Activated CD4-positive, alpha-beta T cell treated with anti-CD3 and anti-CD28 coated beads for 36 hours (primary cell): ENCODE measurements at regions of chr16 and their contacts with region 1.

Region 1: GRCh38 chr16:78962457-78962929 is 638.0 kb downstream of the MAF start:
- DNase-seq: no peak
- ATAC-seq: peak; percentile 86
- H3K4me3 Mint-ChIP-seq: no peak overlapping the region
- H3K27ac Mint-ChIP-seq: peak overlapping the region; percentile 86
- H3K4me1 Mint-ChIP-seq: peaks cover 23% of the 10 kb centered on the region
- H3K27me3 Mint-ChIP-seq: no peaks in the 10 kb centered on the region

Region 2: DNA sequence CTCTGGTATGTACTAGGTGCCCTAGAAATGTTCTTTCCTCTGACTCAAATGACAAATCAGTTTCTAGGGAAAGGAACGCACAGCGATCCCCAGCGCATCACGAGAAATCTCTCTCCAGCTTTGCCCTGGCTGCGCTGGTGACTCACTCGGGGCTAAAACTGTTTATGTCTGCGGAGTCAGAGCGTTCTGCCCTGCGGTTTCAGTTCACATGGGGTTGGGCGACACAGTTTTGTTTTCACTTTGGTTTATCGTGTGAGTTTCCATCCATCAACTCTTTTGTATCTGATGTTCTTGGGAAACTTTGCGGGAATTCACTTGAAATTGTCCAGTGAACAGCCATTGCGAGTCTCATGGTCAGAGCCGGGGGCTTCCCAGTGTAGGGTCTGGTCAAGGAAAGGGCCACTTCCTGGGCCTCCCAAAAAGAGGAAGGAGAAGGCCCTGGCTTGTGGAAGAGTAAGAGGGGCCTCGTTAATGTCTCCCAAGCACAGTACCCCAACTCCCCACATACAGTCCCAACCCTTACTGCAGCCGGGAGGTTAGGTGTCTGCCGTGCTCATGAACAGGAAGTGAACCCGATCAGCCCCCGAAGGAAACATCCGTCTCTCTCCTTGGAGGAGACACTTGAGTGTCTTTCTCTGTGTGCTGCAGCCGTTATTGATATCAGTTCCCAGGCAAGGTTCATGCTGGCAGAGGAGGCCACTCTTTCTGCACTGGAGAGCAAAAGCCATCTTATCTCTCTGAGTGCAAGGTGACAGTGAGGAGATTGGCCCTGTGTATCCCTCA is 219.8 kb before region 1 on chr16:
- CTCF ChIA-PET with region 1: no interaction called
- POLR2A ChIA-PET with region 1: no interaction called
- intact Hi-C with region 1: loop called in 1 of 2 experiments (anchors 1 kb)
- DNase-seq: peak; percentile 89
- ATAC-seq: peak; percentile 95
- H3K4me3 Mint-ChIP-seq: peak overlapping the region; percentile 61
- H3K27ac Mint-ChIP-seq: peak overlapping the region; percentile 96
- H3K4me1 Mint-ChIP-seq: peaks cover 22% of the 10 kb centered on the region
- H3K27me3 Mint-ChIP-seq: no peaks in the 10 kb centered on the region

Region 3: GRCh38 chr16:78892951-78893733 is 69.4 kb before region 1 on chr16:
- CTCF ChIA-PET with region 1: no interaction called
- POLR2A ChIA-PET with region 1: interaction called, 3 read pairs
- intact Hi-C with region 1: loop called in 1 of 2 experiments (anchors 1 kb)
- DNase-seq: peak; percentile 39
- ATAC-seq: peak; percentile 65
- H3K4me3 Mint-ChIP-seq: no peak overlapping the region
- H3K27ac Mint-ChIP-seq: peak overlapping the region; percentile 80
- H3K4me1 Mint-ChIP-seq: peaks cover 61% of the 10 kb centered on the region
- H3K27me3 Mint-ChIP-seq: no peaks in the 10 kb centered on the region

Region 4: GRCh38 chr16:78900044-78900811 is 62.3 kb before region 1 on chr16:
- CTCF ChIA-PET with region 1: no interaction called
- POLR2A ChIA-PET with region 1: interaction called, 5 read pairs
- intact Hi-C with region 1: loop called (anchors 1 kb)
- DNase-seq: no peak
- ATAC-seq: peak; percentile 55
- H3K4me3 Mint-ChIP-seq: no peak overlapping the region
- H3K27ac Mint-ChIP-seq: peak overlapping the region; percentile 80
- H3K4me1 Mint-ChIP-seq: peaks cover 52% of the 10 kb centered on the region
- H3K27me3 Mint-ChIP-seq: no peaks in the 10 kb centered on the region

Region 5: DNA sequence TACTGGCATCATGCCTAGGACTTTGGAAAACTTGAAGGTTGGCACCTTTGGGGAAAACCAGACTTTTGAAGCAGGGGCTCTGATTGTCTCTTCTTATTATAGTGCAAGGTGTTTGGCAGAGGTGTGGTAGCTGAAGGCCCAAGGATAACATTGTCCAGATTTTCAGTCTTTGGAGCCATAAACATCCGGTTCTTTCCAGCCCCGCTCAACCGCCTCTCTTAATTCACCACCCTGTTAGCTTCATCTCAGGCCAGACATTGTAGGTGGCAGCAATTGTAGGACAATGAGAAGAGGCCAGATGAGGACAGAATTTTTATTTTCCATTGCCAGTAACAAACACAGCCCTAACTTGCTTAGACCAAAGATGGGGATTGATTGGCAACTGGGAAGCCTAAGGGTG is 11.7 kb before region 1 on chr16:
- CTCF ChIA-PET with region 1: no interaction called
- POLR2A ChIA-PET with region 1: no interaction called
- intact Hi-C with region 1: no loop called
- DNase-seq: no peak
- ATAC-seq: no peak
- H3K4me3 Mint-ChIP-seq: no peak overlapping the region
- H3K27ac Mint-ChIP-seq: no peak overlapping the region
- H3K4me1 Mint-ChIP-seq: peaks cover 4% of the 10 kb centered on the region
- H3K27me3 Mint-ChIP-seq: no peaks in the 10 kb centered on the region

Region 6: GRCh38 chr16:79008036-79008868 is 45.8 kb after region 1 on chr16:
- CTCF ChIA-PET with region 1: interaction called, 3 read pairs
- POLR2A ChIA-PET with region 1: no interaction called
- intact Hi-C with region 1: loop called (anchors 1 to 2 kb)
- DNase-seq: peak; percentile 49
- ATAC-seq: peak; percentile 76
- H3K4me3 Mint-ChIP-seq: no peak overlapping the region
- H3K27ac Mint-ChIP-seq: peak overlapping the region; percentile 79
- H3K4me1 Mint-ChIP-seq: peaks cover 35% of the 10 kb centered on the region
- H3K27me3 Mint-ChIP-seq: no peaks in the 10 kb centered on the region

Region 7: DNA sequence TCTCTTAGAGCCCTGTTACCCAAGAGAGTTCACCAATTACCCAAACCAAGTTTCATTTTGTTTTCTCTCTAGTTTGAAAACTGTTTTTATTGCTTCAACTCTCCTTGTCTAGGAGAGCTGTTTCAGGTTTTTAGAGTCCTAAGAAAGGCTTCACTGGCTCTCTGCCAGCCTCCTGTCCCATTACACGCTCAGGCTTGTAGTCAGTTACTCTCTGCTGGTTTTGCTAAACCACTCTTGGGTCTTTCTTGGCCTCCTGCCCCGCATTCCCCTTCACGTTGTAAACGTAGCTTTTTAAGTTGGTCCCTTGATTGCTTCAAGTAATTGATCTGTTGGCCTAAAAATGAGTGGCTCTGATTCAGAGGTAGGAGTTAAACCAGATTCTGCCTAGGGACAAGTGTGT is 108.9 kb after region 1 on chr16:
- CTCF ChIA-PET with region 1: no interaction called
- POLR2A ChIA-PET with region 1: interaction called, 11 read pairs
- intact Hi-C with region 1: loop called in 1 of 2 experiments (anchors 5 kb)
- DNase-seq: no peak
- ATAC-seq: no peak
- H3K4me3 Mint-ChIP-seq: no peak overlapping the region
- H3K27ac Mint-ChIP-seq: peak overlapping the region; percentile 34
- H3K4me1 Mint-ChIP-seq: peaks cover 64% of the 10 kb centered on the region
- H3K27me3 Mint-ChIP-seq: peaks cover 2% of the 10 kb centered on the region

Region 8: GRCh38 chr16:79100447-79100846 is 138.0 kb after region 1 on chr16:
- CTCF ChIA-PET with region 1: no interaction called
- POLR2A ChIA-PET with region 1: no interaction called
- intact Hi-C with region 1: no loop called
- DNase-seq: no peak
- ATAC-seq: no peak
- H3K4me3 Mint-ChIP-seq: no peak overlapping the region
- H3K27ac Mint-ChIP-seq: no peak overlapping the region
- H3K4me1 Mint-ChIP-seq: peaks cover 5% of the 10 kb centered on the region
- H3K27me3 Mint-ChIP-seq: no peaks in the 10 kb centered on the region

Region 9: GRCh38 chr16:79201436-79201835 is 238.9 kb after region 1 on chr16:
- CTCF ChIA-PET with region 1: no interaction called
- POLR2A ChIA-PET with region 1: no interaction called
- intact Hi-C with region 1: no loop called
- DNase-seq: no peak
- ATAC-seq: no peak
- H3K4me3 Mint-ChIP-seq: no peak overlapping the region
- H3K27ac Mint-ChIP-seq: no peak overlapping the region
- H3K4me1 Mint-ChIP-seq: no peaks in the 10 kb centered on the region
- H3K27me3 Mint-ChIP-seq: no peaks in the 10 kb centered on the region